ENCODE measurements at regions of chr19 and their contacts with region 1.

Region 1: DNA sequence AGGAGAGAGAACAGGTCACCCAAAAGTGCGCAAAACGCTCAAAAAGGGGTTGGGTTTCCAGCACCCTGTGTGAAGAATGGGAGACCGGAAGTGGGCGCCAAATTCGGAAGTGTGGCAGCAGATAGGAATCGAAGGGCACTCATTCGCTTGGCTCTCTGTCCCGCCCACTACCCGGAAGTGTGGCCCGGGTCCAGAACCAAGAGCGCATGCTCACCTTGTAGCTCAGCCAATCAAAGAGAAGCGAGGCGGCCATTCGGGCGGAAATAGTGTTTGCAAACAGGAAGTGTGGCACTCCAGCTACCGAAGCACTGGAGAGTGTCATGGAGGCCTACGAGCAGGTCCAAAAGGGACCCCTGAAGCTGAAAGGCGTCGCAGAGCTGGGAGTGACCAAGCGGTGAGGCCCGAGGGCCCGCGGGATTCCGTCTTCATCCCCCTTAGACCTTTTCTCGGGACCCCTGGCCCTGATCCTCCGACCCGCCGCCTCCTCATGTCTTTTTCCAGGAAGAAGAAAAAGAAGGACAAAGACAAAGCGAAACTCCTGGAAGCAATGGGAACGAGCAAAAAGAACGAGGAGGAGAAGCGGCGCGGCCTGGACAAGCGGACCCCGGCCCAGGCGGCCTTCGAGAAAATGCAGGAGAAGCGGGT is at the start of gene FAM32A:
- DNase-seq: peak; percentile 94
- ATAC-seq: peak; percentile 88
- H3K4me3 Mint-ChIP-seq: peak within 1 kb of the TSS; percentile 97
- H3K27ac Mint-ChIP-seq: peak within 1 kb of the TSS; percentile 93
- H3K4me1 Mint-ChIP-seq: peaks cover 35% of the 10 kb centered on the region
- H3K27me3 Mint-ChIP-seq: no peaks in the 10 kb centered on the region
- CTCF ChIP-seq: no peak
- total RNA-seq, gene FAM32A: 52.2 and 53.5 TPM in 2 replicates

Region 2: DNA sequence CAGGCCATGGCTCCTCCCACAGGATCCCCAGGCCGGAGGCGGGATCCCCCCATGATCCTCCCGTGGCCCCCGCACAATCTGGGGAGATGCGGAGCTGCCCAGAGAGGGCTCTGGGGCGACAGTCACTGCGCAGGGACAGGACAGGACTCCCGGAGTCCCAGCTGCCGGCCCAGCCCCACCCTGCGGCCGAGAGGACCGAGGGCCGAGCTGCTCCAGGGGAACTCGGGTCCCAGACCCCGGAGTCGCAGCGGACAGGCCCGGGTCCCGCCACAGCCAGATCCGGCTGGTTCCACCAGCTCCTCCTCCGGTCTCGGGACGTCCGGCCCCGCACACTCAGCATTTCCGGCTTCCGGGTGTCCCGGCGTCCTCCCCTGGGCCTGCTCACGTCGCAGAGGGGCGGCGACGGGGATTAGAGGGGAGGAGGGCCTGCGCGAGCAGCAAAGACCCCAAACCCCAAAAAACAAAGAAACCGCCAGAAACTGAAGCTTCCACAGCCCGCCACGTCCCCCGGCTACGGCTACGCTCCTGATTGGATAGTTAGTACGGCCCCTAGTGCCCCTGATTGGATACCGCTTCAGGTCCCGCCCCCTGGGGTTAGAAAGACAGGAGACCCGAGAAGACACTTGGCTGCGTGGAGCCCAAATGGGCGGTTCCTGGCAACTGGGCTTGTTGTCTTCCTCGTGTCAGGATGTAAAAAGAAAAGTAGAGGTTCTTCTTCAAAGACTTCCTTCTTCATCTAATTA is 348.5 kb before region 1 on chr19:
- CTCF ChIA-PET with region 1: no interaction called
- POLR2A ChIA-PET with region 1: interaction called, 12 read pairs
- intact Hi-C with region 1: loop called (anchors 1 kb)
- DNase-seq: peak; percentile 85
- ATAC-seq: peak; percentile 95
- H3K4me3 Mint-ChIP-seq: peak overlapping the region; percentile 92
- H3K27ac Mint-ChIP-seq: peak overlapping the region; percentile 95
- H3K4me1 Mint-ChIP-seq: peaks cover 15% of the 10 kb centered on the region
- H3K27me3 Mint-ChIP-seq: peaks cover 4% of the 10 kb centered on the region
- CTCF ChIP-seq: no peak

Region 3: DNA sequence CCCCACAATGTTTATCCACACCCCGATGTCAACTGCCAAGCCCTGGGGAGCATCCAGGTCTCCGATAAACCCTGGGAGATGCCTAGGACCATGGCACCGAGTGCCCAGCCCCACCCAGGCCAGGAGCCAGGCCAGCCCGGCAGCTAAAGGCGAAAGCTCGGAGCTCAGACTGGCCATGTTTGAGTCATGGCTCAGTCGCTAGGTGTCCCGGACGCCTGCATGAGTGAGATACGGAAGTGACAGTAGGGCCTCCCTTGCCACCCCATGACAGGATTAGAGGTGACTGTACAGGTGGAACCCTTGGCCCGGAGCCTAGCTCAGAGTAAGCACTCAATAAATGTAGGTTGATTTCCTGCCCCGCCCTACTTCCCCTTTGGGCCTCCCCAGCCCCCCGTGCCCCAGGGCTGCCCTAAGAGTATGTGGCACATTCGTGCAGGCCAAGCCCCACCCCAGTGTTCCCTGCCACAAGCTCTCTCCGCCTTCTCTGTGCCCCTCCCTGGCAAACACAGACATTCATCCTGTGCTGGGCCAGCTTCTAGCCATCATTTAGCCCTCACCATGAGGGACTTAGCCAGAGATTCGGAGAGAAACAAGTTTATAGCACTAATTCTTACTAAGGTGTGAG is 114.8 kb before region 1 on chr19:
- CTCF ChIA-PET with region 1: interaction called, 12 read pairs
- POLR2A ChIA-PET with region 1: interaction called, 24 read pairs
- intact Hi-C with region 1: loop called (anchors 1 kb)
- DNase-seq: peak; percentile 64
- ATAC-seq: peak; percentile 93
- H3K4me3 Mint-ChIP-seq: peak overlapping the region; percentile 67
- H3K27ac Mint-ChIP-seq: no peak overlapping the region
- H3K4me1 Mint-ChIP-seq: peaks cover 16% of the 10 kb centered on the region
- H3K27me3 Mint-ChIP-seq: no peaks in the 10 kb centered on the region
- CTCF ChIP-seq: no peak

Region 4: GRCh38 chr19:16118489-16119033 is 66.7 kb before region 1 on chr19:
- CTCF ChIA-PET with region 1: interaction called, 18 read pairs
- POLR2A ChIA-PET with region 1: interaction called, 14 read pairs
- intact Hi-C with region 1: loop called (anchors 1 kb)
- DNase-seq: peak; percentile 76
- ATAC-seq: peak; percentile 87
- H3K4me3 Mint-ChIP-seq: peak overlapping the region; percentile 73
- H3K27ac Mint-ChIP-seq: peak overlapping the region; percentile 98
- H3K4me1 Mint-ChIP-seq: peaks cover 80% of the 10 kb centered on the region
- H3K27me3 Mint-ChIP-seq: no peaks in the 10 kb centered on the region
- CTCF ChIP-seq: no peak

Region 5: DNA sequence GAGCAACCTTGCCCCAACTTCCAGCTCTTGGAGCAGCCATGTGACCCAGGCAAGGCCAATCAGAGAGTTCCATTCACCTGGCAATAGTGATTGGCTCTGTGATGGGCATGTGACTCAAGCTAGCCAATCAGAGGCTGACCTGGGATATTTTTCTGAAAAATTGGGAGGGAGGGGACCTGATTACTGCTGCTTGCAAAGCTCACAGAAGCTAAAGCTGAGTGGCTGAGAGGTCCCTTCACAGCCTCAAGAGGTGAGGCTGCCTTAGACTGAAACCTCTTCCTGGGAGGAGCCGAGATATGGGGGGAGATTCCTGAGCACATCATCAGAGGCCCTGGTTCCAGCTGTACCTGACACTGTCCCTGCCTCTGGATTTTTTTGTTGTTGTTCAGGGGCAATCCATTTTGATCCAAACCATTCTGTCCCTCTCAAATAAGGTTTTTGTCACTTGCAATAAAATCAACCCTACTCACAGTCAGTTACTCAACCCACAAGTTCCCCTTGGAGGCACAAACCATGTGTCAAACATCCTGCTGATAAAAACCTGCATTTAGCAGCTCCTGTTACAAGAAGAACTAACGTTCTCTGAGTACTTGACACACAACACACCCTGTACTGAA is 16.7 kb before region 1 on chr19:
- CTCF ChIA-PET with region 1: interaction called, 3 read pairs
- POLR2A ChIA-PET with region 1: interaction called, 10 read pairs
- intact Hi-C with region 1: no loop called
- DNase-seq: no peak
- ATAC-seq: peak; percentile 74
- H3K4me3 Mint-ChIP-seq: no peak overlapping the region
- H3K27ac Mint-ChIP-seq: peak overlapping the region; percentile 61
- H3K4me1 Mint-ChIP-seq: peaks cover 22% of the 10 kb centered on the region
- H3K27me3 Mint-ChIP-seq: no peaks in the 10 kb centered on the region
- CTCF ChIP-seq: no peak

Region 6: DNA sequence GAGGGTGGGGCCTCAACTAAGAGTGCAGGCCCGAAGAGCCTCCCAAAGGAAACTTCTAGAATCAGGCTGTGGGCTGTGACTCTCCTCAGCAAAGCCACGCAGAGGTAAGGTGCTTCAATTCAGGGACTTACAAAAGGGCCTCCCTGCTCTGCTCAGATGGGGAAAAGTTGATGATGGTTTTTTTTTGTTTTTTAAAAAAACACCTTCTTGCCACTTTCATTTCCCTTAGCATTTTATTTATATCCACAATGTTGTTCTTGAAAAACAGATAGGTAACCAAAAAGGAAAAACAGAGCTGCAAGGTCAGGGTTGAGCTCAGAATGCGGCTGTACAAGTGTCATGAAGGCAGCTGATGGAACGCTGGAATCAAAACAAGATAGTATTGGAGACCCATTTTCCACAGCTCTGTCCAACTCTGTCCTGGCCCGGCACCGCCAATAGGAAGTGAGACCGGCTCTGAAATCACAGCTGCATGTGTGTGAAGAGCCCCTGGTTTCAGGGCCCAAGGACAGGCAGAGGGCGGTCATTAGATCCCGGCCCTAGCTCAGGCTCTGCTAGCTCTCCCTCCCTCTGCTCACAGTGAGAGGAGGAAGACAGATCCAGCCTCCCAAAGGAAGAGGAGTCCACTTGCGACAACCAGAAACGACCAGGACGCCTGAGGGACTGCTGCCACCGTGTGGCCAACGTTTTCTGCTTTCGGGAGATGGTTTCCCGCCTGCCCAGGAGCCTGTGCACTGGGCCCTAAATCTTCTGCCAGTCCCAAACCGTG is 197.7 kb after region 1 on chr19:
- CTCF ChIA-PET with region 1: interaction called, 11 read pairs
- POLR2A ChIA-PET with region 1: interaction called, 3 read pairs
- intact Hi-C with region 1: loop called (anchors 2 kb)
- DNase-seq: peak; percentile 63
- ATAC-seq: peak; percentile 59
- H3K4me3 Mint-ChIP-seq: peak overlapping the region; percentile 57
- H3K27ac Mint-ChIP-seq: peak overlapping the region; percentile 94
- H3K4me1 Mint-ChIP-seq: peaks cover 82% of the 10 kb centered on the region
- H3K27me3 Mint-ChIP-seq: no peaks in the 10 kb centered on the region
- CTCF ChIP-seq: no peak